ENCODE measurements at regions of chr2 and their contacts with region 1.

Region 1: DNA sequence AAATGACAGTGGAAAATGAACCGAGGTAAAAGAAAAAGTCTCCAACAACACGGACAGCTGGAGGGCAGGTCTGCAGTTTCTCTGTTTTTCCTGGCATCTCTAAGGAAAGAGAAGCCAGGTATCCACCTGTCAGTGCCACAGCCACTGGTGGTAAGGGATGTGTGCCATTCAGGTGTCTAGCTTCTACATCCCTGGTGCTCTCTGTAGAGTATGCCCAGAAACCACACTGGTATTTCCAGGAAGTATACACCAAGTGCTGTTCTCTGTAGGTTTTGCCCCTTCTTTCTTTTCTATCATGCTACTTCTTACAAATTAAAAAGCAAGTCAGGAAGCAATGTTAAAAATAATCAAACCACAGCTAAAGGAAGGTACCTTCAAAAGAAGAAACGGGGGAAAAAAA is 7.6 kb upstream of the AGFG1 start:
- DNase-seq: no peak
- ATAC-seq: no peak
- H3K4me3 ChIP-seq: no peak overlapping the region
- H3K27ac ChIP-seq: no peak overlapping the region
- H3K4me1 ChIP-seq: peaks cover 25 to 29% of the 10 kb centered on the region in 2 experiments
- H3K27me3 ChIP-seq: no peaks in the 10 kb centered on the region
- CTCF ChIP-seq: no peak
- EP300 ChIP-seq: no peak
- POLR2A ChIP-seq: no peak
- RAD21 ChIP-seq: no peak

Region 2: GRCh38 chr2:227411320-227411989 is 52.9 kb before region 1 on chr2:
- CTCF ChIA-PET with region 1: no interaction called
- POLR2A ChIA-PET with region 1: interaction called, 3 read pairs
- in situ Hi-C with region 1: loop called (anchors 5 kb)
- intact Hi-C with region 1: loop called (anchors 2 kb)
- DNase-seq: no peak
- ATAC-seq: no peak
- H3K4me3 ChIP-seq: no peak overlapping the region
- H3K27ac ChIP-seq: no peak overlapping the region
- H3K4me1 ChIP-seq: no peaks in the 10 kb centered on the region; a peak in 2 of 5 replicates
- H3K27me3 ChIP-seq: no peaks in the 10 kb centered on the region
- CTCF ChIP-seq: no peak
- EP300 ChIP-seq: no peak
- POLR2A ChIP-seq: no peak
- RAD21 ChIP-seq: no peak

Region 3: GRCh38 chr2:227450926-227451654 is 13.3 kb before region 1 on chr2:
- CTCF ChIA-PET with region 1: no interaction called
- POLR2A ChIA-PET with region 1: interaction called, 4 read pairs
- in situ Hi-C with region 1: no loop called
- intact Hi-C with region 1: loop called (anchors 2 kb)
- DNase-seq: peak; percentile 81 to 93 (median 86)
- ATAC-seq: peak; percentile 94
- H3K4me3 ChIP-seq: no peak overlapping the region
- H3K27ac ChIP-seq: peak overlapping the region; percentile 86
- H3K4me1 ChIP-seq: peaks cover 4 to 26% of the 10 kb centered on the region in 2 experiments; a peak in 3 of 5 replicates
- H3K27me3 ChIP-seq: no peaks in the 10 kb centered on the region
- CTCF ChIP-seq: no peak
- EP300 ChIP-seq: peak; percentile 96
- POLR2A ChIP-seq: no peak
- RAD21 ChIP-seq: no peak

Region 4: GRCh38 chr2:227479865-227480475 is 15.6 kb after region 1 on chr2:
- CTCF ChIA-PET with region 1: no interaction called
- POLR2A ChIA-PET with region 1: interaction called, 16 read pairs
- in situ Hi-C with region 1: no loop called
- intact Hi-C with region 1: no loop called
- DNase-seq: peak; percentile 30 to 36 (median 32)
- ATAC-seq: peak; percentile 89
- H3K4me3 ChIP-seq: no peak overlapping the region
- H3K27ac ChIP-seq: no peak overlapping the region
- H3K4me1 ChIP-seq: peaks cover 2 to 3% of the 10 kb centered on the region in 2 experiments; a peak in 2 of 5 replicates
- H3K27me3 ChIP-seq: no peaks in the 10 kb centered on the region
- CTCF ChIP-seq: peak in 2 of 3 experiments; percentile 22 to 57; a peak in 3 of 6 replicates
- EP300 ChIP-seq: no peak
- POLR2A ChIP-seq: no peak
- RAD21 ChIP-seq: peak in 1 of 2 experiments; percentile 59; a peak in 3 of 4 replicates

Region 5: DNA sequence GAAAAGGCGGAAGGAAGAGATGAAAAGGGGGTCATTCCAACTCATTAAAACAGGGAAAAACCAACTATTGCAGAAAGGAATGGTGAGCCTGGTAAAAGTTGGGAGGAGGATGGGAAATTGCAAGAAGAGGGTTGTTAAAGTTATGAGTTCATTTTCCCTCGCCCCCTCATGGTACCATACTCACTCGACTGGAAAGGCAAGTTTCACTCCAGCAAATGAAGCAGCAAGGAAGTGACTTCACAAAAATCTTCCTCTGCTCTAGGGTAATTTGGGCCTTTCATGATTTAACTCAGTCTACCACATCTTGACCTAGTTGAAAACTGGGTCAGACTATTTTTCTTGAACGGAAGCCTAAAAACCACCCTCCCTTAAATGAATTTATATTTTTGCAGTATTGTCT is 384.2 kb after region 1 on chr2:
- CTCF ChIA-PET with region 1: no interaction called
- POLR2A ChIA-PET with region 1: no interaction called
- in situ Hi-C with region 1: no loop called
- intact Hi-C with region 1: no loop called
- DNase-seq: no peak
- ATAC-seq: no peak
- H3K4me3 ChIP-seq: no peak overlapping the region
- H3K27ac ChIP-seq: no peak overlapping the region
- H3K4me1 ChIP-seq: no peaks in the 10 kb centered on the region
- H3K27me3 ChIP-seq: no peaks in the 10 kb centered on the region
- CTCF ChIP-seq: no peak
- EP300 ChIP-seq: no peak
- POLR2A ChIP-seq: no peak
- RAD21 ChIP-seq: no peak